Activated T-helper 1 cell treated with anti-CD3 and anti-CD28 coated beads, Interleukin-12 subunit alpha, Interleukin-12 subunit beta, Interleukin-2, Interleukin-4 antibody, amounts not matched to agents 30 ng/mL and 10 ng/mL and 1 ng/mL, durations not matched to agents 14 hours and 24 hours and 36 hours (primary cell): ENCODE measurements at regions of chr21 and their contacts with region 1.

Region 1: DNA sequence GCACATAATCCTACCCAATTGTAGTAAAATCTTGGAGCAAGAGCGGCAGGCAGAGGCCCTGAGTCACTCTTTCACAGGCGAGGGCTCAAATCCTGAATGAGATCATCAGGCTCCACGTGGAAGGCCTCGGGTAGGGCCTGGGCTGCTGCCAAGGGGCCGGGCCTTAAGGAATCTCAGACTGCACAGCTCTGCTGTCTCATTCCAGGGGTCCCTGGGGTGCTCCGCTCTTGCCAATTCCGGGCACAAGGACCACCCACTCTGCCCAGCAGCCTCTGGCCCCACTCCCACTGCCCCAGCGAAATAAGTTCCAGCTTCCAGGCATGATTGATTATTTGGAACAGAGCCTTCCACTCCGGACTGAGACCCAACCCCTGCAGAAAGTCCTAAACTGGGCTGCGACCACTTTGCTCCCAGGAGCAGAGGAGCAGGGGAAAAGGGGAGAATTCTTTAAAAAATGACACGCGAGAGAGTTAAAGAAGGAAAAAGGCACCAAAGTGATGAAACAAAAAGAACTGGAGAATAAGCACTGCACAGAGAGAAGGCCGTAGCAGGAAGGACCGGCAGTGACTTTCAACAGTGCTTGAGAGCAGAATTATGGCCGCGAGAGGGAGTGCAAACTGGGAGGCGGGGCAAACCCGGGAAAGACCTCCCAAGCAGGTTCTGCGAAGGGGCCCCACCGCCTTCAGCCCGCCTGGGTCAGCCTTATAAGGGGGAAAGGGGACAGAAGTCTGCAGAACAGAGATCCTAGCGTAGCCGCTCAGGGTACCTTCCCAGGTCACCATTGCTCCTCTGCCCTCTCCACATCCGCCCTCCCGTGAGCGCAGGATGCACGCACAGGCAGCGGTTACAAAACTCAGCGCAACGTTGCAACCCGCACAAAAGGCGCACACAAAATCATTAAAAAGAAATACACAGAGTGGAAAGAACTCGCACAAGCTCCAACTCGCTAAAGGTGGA is 2.0 kb downstream of the ADAMTS1 start:
- DNase-seq: peak; percentile 31
- H3K4me3 Mint-ChIP-seq: peak overlapping the region; percentile 84
- H3K27ac Mint-ChIP-seq: peak overlapping the region; percentile 80
- H3K4me1 Mint-ChIP-seq: peaks cover 50% of the 10 kb centered on the region
- H3K27me3 Mint-ChIP-seq: peaks cover 54% of the 10 kb centered on the region

Region 2: DNA sequence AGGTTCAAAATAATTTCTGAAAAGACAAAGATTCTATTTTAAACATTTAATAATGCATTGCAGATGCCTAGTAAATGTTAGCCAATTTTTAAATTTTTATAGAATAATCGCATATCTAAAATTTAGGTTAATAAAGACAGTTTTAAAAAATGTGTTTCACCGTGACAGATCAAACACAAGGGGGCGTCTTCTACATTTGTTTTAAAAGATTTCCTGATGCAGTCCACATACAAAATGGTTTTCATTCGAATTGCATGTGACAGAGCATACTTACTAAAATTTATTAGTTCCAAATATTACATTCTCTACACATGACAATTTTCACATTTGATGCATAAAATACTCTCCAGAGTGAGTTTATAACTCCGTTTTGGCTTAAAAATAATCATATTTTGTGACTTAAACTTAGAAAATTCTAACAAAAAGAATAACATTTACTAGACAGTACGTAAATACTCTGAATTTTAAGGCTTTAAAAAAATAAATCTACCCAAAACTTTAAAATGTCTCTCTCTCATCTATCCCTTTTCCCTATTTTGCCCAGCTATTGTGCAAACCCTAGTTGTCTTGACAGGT is 73.6 kb before region 1 on chr21:
- intact Hi-C with region 1: loop called (anchors 5 kb)
- DNase-seq: no peak
- H3K4me3 Mint-ChIP-seq: no peak overlapping the region
- H3K27ac Mint-ChIP-seq: no peak overlapping the region
- H3K4me1 Mint-ChIP-seq: no peaks in the 10 kb centered on the region
- H3K27me3 Mint-ChIP-seq: peaks cover 11% of the 10 kb centered on the region

Region 3: GRCh38 chr21:26967062-26967913 is 124.0 kb after region 1 on chr21 and contains the start of gene ADAMTS5:
- intact Hi-C with region 1: loop called (anchors 5 kb)
- DNase-seq: no peak
- H3K4me3 Mint-ChIP-seq: no peak within 1 kb of the TSS
- H3K27ac Mint-ChIP-seq: no peak within 1 kb of the TSS
- H3K4me1 Mint-ChIP-seq: no peaks in the 10 kb centered on the region
- H3K27me3 Mint-ChIP-seq: peaks cover 39% of the 10 kb centered on the region
- total RNA-seq, gene ADAMTS5: not detected in 2 replicates

Region 4: DNA sequence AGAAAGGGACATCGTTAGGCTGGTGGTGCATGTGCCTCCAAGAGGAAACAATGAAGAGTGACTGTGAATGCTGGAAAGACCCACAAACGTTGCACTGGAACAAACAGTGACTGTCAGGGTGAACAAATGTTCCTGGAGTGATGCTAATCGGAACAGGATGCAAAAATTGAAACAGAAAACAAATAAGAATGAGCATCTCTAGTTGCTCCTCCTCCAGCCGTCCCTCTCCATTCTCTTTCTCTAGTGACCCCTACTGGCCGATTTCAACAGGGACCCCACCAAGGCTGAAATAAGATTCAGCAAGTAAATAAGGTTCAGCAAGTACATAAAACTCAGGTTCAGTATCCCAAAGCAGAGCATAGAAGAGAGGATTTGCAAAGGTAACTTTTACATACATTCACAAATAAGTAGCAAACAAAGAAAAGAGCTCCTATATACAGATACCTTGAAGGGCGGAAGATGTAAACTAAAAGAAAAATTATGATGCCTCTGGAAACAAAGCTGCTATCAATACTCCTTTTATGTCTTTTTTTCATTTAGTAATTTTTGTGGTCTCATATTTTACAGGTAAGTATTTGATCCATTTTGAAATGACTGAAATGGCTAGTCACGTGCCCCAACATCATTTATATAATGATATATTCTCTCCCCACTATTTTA is 959.7 kb after region 1 on chr21:
- intact Hi-C with region 1: loop called (anchors 5 kb)
- DNase-seq: peak; percentile 5
- H3K4me3 Mint-ChIP-seq: no peak overlapping the region
- H3K27ac Mint-ChIP-seq: no peak overlapping the region
- H3K4me1 Mint-ChIP-seq: no peaks in the 10 kb centered on the region
- H3K27me3 Mint-ChIP-seq: no peaks in the 10 kb centered on the region